Aorta (tissue), 5 donors: ENCODE measurements at regions of chr3 and their contacts with region 1.

Region 1: GRCh38 chr3:74630602-74631001 is 16.1 kb upstream of the CNTN3 start:
- DNase-seq: no peak
- ATAC-seq: no peak
- H3K4me3 ChIP-seq: no peak overlapping the region
- H3K27ac ChIP-seq: no peak overlapping the region
- H3K4me1 ChIP-seq: no peaks in the 10 kb centered on the region
- H3K27me3 ChIP-seq: no peaks in the 10 kb centered on the region

Region 2: GRCh38 chr3:74267588-74268184 is 362.9 kb before region 1 on chr3:
- intact Hi-C with region 1: loop called (anchors 5 kb)
- DNase-seq: peak in 1 of 2 donors; percentile 40
- ATAC-seq: no peak
- H3K4me3 ChIP-seq: no peak overlapping the region
- H3K27ac ChIP-seq: no peak overlapping the region
- H3K4me1 ChIP-seq: peaks cover 0 to 2% of the 10 kb centered on the region in 2 donors
- H3K27me3 ChIP-seq: no peaks in the 10 kb centered on the region

Region 3: GRCh38 chr3:74273091-74273490 is 357.5 kb before region 1 on chr3:
- intact Hi-C with region 1: loop called (anchors 5 kb)
- DNase-seq: peak in 1 of 2 donors; percentile 45
- ATAC-seq: no peak
- H3K4me3 ChIP-seq: no peak overlapping the region
- H3K27ac ChIP-seq: no peak overlapping the region
- H3K4me1 ChIP-seq: peaks cover 0 to 2% of the 10 kb centered on the region in 2 donors
- H3K27me3 ChIP-seq: no peaks in the 10 kb centered on the region

Region 4: GRCh38 chr3:74375653-74376052 is 254.9 kb before region 1 on chr3:
- intact Hi-C with region 1: loop called (anchors 2 to 5 kb)
- DNase-seq: no peak
- ATAC-seq: no peak
- H3K4me3 ChIP-seq: no peak overlapping the region
- H3K27ac ChIP-seq: no peak overlapping the region
- H3K4me1 ChIP-seq: no peaks in the 10 kb centered on the region
- H3K27me3 ChIP-seq: no peaks in the 10 kb centered on the region

Region 5: GRCh38 chr3:74426571-74426970 is 204.0 kb before region 1 on chr3:
- intact Hi-C with region 1: loop called in 1 of 2 experiments (anchors 5 kb)
- DNase-seq: no peak
- ATAC-seq: no peak
- H3K4me3 ChIP-seq: no peak overlapping the region
- H3K27ac ChIP-seq: no peak overlapping the region
- H3K4me1 ChIP-seq: no peaks in the 10 kb centered on the region
- H3K27me3 ChIP-seq: no peaks in the 10 kb centered on the region

Region 6: GRCh38 chr3:74711913-74712512 is 81.4 kb after region 1 on chr3:
- intact Hi-C with region 1: no loop called
- DNase-seq: no peak
- ATAC-seq: peak; percentile 33
- H3K4me3 ChIP-seq: no peak overlapping the region
- H3K27ac ChIP-seq: no peak overlapping the region
- H3K4me1 ChIP-seq: no peaks in the 10 kb centered on the region
- H3K27me3 ChIP-seq: no peaks in the 10 kb centered on the region

Region 7: DNA sequence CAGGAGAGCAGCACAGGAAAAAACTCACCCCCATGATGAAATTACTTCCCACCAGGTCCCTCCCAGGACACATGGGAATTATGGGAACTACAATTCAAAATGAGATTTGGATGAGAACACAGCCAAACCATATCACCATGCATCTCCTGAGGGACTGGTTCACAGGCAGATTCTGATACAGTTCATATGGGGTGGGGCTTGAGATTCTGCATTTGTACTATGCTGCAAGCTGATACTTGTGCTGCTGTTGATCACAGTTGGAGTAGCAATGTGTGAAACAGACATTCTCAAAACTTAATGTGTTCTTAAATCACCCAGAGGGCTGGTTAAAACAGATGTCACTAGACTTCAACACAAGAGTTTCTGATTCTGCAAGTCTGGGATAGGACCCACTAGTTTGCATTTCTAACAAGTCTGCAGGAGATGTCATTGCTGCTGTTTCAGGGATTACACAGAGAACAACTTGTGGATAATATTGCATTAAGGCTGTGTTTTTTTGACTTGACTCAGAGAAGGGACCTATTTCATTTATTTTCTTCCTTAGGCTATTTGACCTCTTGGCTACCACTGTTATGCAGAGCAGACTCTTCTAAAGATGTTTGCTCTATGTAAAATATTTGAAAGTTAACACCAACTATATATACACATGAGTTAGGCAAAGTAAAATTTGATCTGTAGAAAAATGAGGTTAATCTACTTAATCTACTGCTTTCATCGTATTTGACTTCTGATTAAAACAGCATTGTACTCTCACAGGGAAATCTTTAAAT is 178.1 kb after region 1 on chr3:
- intact Hi-C with region 1: no loop called
- DNase-seq: no peak
- ATAC-seq: no peak
- H3K4me3 ChIP-seq: no peak overlapping the region
- H3K27ac ChIP-seq: no peak overlapping the region
- H3K4me1 ChIP-seq: no peaks in the 10 kb centered on the region
- H3K27me3 ChIP-seq: no peaks in the 10 kb centered on the region